Activated CD4-positive, alpha-beta T cell treated with anti-CD3 and anti-CD28 coated beads, Interleukin-2, amount 10 ng/mL, durations not matched to agents 7 days and 5 days (primary cell): ENCODE measurements at regions of chr5 and their contacts with region 1.

Region 1: GRCh38 chr5:157271740-157272271 is 5.9 kb downstream of the CYFIP2 start:
- DNase-seq: peak; percentile 96
- H3K4me3 Mint-ChIP-seq: peak overlapping the region; percentile 97
- H3K27ac Mint-ChIP-seq: peak overlapping the region; percentile 97
- H3K4me1 Mint-ChIP-seq: peaks cover 85% of the 10 kb centered on the region
- H3K27me3 Mint-ChIP-seq: no peaks in the 10 kb centered on the region

Region 2: DNA sequence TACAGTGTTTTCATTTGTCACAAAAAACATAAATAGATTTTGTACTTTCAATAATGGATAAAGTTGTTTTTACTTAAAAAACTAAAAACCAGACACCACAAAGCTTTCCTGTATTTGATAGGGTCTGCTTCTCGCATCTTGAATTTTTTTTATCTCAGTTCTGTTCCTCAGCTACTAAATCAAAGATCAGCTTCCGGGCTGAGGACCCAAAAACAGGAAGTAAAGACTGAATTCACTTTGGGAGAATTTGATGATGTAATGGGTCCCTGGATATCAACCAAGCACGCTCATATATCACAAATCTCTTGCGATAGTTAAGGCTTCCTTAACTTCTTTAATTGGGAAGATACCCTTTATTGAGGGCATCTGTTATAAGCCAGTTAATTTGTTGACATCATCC is 67.0 kb before region 1 on chr5:
- CTCF ChIA-PET with region 1: no interaction called
- POLR2A ChIA-PET with region 1: no interaction called
- DNase-seq: no peak
- H3K4me3 Mint-ChIP-seq: peak overlapping the region; percentile 3
- H3K27ac Mint-ChIP-seq: peak overlapping the region; percentile 75
- H3K4me1 Mint-ChIP-seq: peaks cover 85% of the 10 kb centered on the region
- H3K27me3 Mint-ChIP-seq: no peaks in the 10 kb centered on the region

Region 3: DNA sequence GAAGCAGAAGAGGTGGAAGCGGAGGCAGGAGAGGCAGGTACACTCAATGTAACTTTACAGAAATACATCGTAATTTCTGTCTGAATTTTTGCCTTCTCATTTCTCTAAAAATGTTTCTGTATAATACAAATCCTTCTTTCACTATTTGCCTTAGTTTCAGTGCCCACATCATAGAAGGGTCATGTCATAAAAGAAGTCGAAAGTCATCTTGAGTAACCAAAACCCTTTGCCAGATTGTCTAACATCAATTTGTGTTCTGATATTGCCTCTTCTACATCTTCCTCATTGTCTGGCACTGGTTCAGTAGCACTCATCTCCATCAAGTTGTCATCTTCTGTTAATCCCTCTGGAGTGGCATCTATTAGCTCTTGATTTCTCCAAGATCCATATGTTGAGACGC is 12.1 kb before region 1 on chr5:
- CTCF ChIA-PET with region 1: interaction called, 26 read pairs
- POLR2A ChIA-PET with region 1: no interaction called
- DNase-seq: no peak
- H3K4me3 Mint-ChIP-seq: no peak overlapping the region
- H3K27ac Mint-ChIP-seq: no peak overlapping the region
- H3K4me1 Mint-ChIP-seq: peaks cover 78% of the 10 kb centered on the region
- H3K27me3 Mint-ChIP-seq: no peaks in the 10 kb centered on the region

Region 4: DNA sequence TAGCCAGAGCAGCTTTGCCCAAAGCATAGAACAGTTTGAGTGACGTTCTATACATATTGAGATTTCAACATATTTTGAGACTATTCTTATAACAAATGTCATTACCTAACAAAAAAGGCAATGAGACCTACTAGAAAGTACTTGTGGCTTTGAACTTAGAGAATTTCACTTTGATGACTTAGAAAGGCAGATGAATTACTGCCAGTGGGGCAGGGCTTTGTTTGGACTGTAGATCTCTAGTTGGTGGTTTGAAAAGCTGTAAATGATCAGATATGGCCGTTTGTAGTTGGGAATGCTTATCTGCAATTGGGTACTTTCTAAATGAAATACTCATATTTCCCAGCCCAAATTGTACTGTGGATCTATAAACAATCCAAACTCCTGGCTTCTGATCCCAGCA is 352.3 kb after region 1 on chr5:
- CTCF ChIA-PET with region 1: no interaction called
- POLR2A ChIA-PET with region 1: no interaction called
- DNase-seq: no peak
- H3K4me3 Mint-ChIP-seq: no peak overlapping the region
- H3K27ac Mint-ChIP-seq: no peak overlapping the region
- H3K4me1 Mint-ChIP-seq: peaks cover 8% of the 10 kb centered on the region
- H3K27me3 Mint-ChIP-seq: peaks cover 11% of the 10 kb centered on the region